ENCODE measurements at regions of chr17 and their contacts with region 1.

Region 1: DNA sequence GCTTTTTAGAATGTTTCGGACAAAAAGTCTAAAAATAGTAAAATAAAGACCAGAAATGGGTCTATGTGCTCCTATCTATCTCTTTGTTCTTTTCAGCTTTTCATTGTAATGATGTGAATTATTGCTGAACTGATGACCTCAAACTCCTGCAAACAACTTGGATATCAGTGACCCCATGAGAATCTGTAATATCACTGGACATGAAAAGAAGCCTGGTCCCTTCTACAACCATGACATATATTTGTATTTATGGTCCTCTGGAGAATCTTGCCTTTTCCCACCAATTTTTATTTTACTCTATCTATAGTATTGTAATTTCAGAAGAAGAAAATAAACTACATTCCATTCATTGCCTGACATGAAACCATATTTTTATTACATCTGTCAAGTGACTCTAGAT is 740.7 kb upstream of the CA10 start:
- DNase-seq: no peak
- ATAC-seq: no peak
- H3K4me3 ChIP-seq: no peak overlapping the region
- H3K4me3 Mint-ChIP-seq: no peak overlapping the region
- H3K27ac ChIP-seq: no peak overlapping the region
- H3K27ac Mint-ChIP-seq: no peak overlapping the region
- H3K4me1 ChIP-seq: no peaks in the 10 kb centered on the region
- H3K4me1 Mint-ChIP-seq: no peaks in the 10 kb centered on the region
- H3K27me3 ChIP-seq: no peaks in the 10 kb centered on the region
- H3K27me3 Mint-ChIP-seq: no peaks in the 10 kb centered on the region
- CTCF ChIP-seq: no peak

Region 2: GRCh38 chr17:52846325-52846724 is 52.9 kb before region 1 on chr17:
- CTCF ChIA-PET with region 1: no interaction called
- POLR2A ChIA-PET with region 1: no interaction called
- intact Hi-C with region 1: loop called in 1 of 2 experiments (anchors 10 kb)
- DNase-seq: no peak
- ATAC-seq: no peak
- H3K4me3 ChIP-seq: no peak overlapping the region
- H3K4me3 Mint-ChIP-seq: no peak overlapping the region
- H3K27ac ChIP-seq: no peak overlapping the region
- H3K27ac Mint-ChIP-seq: no peak overlapping the region
- H3K4me1 ChIP-seq: no peaks in the 10 kb centered on the region
- H3K4me1 Mint-ChIP-seq: no peaks in the 10 kb centered on the region
- H3K27me3 ChIP-seq: no peaks in the 10 kb centered on the region
- H3K27me3 Mint-ChIP-seq: no peaks in the 10 kb centered on the region
- CTCF ChIP-seq: no peak

Region 3: GRCh38 chr17:52965856-52966255 is 66.6 kb after region 1 on chr17:
- CTCF ChIA-PET with region 1: no interaction called
- POLR2A ChIA-PET with region 1: no interaction called
- intact Hi-C with region 1: no loop called
- DNase-seq: no peak
- ATAC-seq: no peak
- H3K4me3 ChIP-seq: no peak overlapping the region
- H3K4me3 Mint-ChIP-seq: no peak overlapping the region
- H3K27ac ChIP-seq: no peak overlapping the region
- H3K27ac Mint-ChIP-seq: no peak overlapping the region
- H3K4me1 ChIP-seq: no peaks in the 10 kb centered on the region
- H3K4me1 Mint-ChIP-seq: no peaks in the 10 kb centered on the region
- H3K27me3 ChIP-seq: no peaks in the 10 kb centered on the region
- H3K27me3 Mint-ChIP-seq: no peaks in the 10 kb centered on the region
- CTCF ChIP-seq: no peak

Measured in CD8-positive, alpha-beta T cell (primary cell).